A673 (cell line): ENCODE measurements at regions of chr21 and their contacts with region 1.

Region 1: GRCh38 chr21:41641821-41642701 is 124.8 kb downstream of the RIPK4 start:
- DNase-seq: no peak
- H3K4me3 ChIP-seq: no peak overlapping the region
- H3K27ac ChIP-seq: no peak overlapping the region
- H3K4me1 ChIP-seq: no peaks in the 10 kb centered on the region
- H3K27me3 ChIP-seq: no peaks in the 10 kb centered on the region
- CTCF ChIP-seq: no peak

Region 2: GRCh38 chr21:40563900-40564299 is 1078.2 kb before region 1 on chr21:
- CTCF ChIA-PET with region 1: no interaction called
- POLR2A ChIA-PET with region 1: no interaction called
- intact Hi-C with region 1: no loop called
- DNase-seq: no peak
- H3K4me3 ChIP-seq: no peak overlapping the region
- H3K27ac ChIP-seq: no peak overlapping the region
- H3K4me1 ChIP-seq: no peaks in the 10 kb centered on the region
- H3K27me3 ChIP-seq: no peaks in the 10 kb centered on the region
- CTCF ChIP-seq: no peak

Region 3: GRCh38 chr21:41656962-41657516 is 15.0 kb after region 1 on chr21:
- CTCF ChIA-PET with region 1: no interaction called
- POLR2A ChIA-PET with region 1: interaction called, 24 read pairs
- intact Hi-C with region 1: no loop called
- DNase-seq: no peak
- H3K4me3 ChIP-seq: no peak overlapping the region
- H3K27ac ChIP-seq: no peak overlapping the region
- H3K4me1 ChIP-seq: no peaks in the 10 kb centered on the region
- H3K27me3 ChIP-seq: peaks cover 3% of the 10 kb centered on the region
- CTCF ChIP-seq: no peak

Region 4: DNA sequence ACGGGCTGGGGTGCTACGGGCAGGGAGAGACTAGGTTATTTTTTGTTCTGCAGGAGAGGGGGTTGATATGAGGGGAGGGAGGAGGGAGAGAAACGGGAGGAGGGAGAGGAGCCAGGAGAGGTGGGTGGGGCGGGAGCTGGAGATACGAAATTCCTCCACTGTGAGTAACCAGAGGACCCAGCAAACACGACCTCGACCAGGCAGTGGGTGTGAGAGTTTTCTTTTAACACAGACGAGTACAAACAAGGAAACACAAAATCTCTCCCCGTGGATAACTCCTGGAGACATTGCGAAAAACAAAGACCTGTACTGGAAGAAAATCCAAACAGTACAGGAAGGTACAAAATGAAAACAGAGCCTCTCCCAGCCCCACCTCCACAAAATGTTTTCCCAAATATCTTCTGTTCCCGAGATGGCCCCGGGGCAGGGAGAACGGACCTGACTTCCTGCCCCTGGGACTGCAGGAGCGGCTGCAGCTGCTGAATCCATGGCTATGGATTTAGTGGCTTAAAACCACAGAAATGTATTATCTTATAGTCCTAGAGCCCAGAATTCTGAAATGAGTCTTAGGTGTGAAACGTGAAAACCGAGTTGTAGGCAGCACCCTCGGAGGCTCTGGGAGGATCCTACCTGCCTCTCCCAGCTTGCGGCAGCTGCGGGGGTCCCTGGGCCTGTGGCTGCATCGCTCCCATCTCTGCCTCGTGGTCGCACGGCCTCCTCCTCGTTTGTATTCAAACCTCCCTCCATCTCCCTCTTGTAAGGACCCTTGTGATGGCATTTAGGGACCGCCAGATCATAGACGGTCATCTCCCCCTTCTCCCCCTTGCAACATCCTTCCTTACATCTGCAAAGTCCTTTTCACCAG is 42.6 kb after region 1 on chr21:
- CTCF ChIA-PET with region 1: no interaction called
- POLR2A ChIA-PET with region 1: no interaction called
- intact Hi-C with region 1: no loop called
- DNase-seq: no peak
- H3K4me3 ChIP-seq: no peak overlapping the region
- H3K27ac ChIP-seq: no peak overlapping the region
- H3K4me1 ChIP-seq: no peaks in the 10 kb centered on the region
- H3K27me3 ChIP-seq: no peaks in the 10 kb centered on the region
- CTCF ChIP-seq: no peak